Naive thymus-derived CD4-positive, alpha-beta T cell (primary cell): ENCODE measurements at regions of chr1 and their contacts with region 1.

Region 1: GRCh38 chr1:46527474-46528296 is 23.8 kb downstream of the KNCN start:
- DNase-seq: peak; percentile 34 to 81 (median 57)
- ATAC-seq: peak; percentile 79
- H3K4me3 ChIP-seq: no peak overlapping the region
- H3K4me3 Mint-ChIP-seq: peak overlapping the region in 1 of 10 donors; percentile 34
- H3K27ac ChIP-seq: no peak overlapping the region
- H3K27ac Mint-ChIP-seq: peak overlapping the region in 1 of 9 donors; percentile 34
- H3K4me1 ChIP-seq: peaks cover 3 to 5% of the 10 kb centered on the region in 2 donors
- H3K4me1 Mint-ChIP-seq: peaks cover 0 to 20% (median 6%) of the 10 kb centered on the region in 7 donors
- H3K27me3 ChIP-seq: no peaks in the 10 kb centered on the region
- H3K27me3 Mint-ChIP-seq: peaks cover 16 to 35% (median 31%) of the 10 kb centered on the region in 5 donors

Region 2: DNA sequence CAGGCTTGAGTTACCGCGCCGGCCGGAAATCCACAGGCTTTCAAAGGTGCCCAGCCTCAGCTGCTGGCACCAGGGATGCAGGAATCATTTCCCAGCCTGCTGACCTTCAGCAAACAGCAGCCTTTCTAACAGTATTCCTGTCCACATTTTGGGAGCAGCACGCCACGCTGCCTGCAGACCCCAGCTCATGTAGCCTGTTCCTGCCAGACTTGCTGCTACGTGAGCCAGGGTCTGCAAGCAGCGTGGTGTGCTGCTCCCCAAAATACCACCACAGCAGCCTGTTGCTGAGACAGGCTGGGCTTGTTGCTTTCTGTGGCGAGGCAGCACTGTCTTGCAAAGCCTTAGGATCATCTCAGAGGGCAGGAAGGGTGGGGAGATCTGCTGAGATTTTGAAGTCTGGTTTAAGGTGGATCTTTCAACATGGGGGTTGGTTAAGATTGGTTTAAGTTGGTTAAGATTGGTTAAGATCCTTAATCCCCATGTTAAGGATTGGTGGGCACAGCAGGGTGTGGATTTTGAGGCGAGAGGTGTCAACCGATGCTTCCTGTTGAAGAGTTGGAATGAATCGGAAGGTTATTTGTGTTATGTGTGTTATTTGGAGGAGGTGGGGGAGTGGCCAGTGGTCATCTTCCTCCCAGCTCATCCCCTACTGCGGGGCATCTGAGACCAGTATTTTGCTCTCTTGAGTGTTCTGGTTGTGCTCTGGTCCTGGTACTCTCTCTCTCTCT is 120.6 kb before region 1 on chr1:
- CTCF ChIA-PET with region 1: no interaction called
- POLR2A ChIA-PET with region 1: no interaction called
- intact Hi-C with region 1: loop called (anchors 1 kb)
- DNase-seq: no peak
- ATAC-seq: no peak
- H3K4me3 ChIP-seq: no peak overlapping the region
- H3K4me3 Mint-ChIP-seq: peak overlapping the region in 2 of 10 donors; percentile 40 to 42
- H3K27ac ChIP-seq: no peak overlapping the region
- H3K27ac Mint-ChIP-seq: no peak overlapping the region
- H3K4me1 ChIP-seq: no peaks in the 10 kb centered on the region
- H3K4me1 Mint-ChIP-seq: peaks cover 0 to 7% (median 0%) of the 10 kb centered on the region in 7 donors
- H3K27me3 ChIP-seq: no peaks in the 10 kb centered on the region
- H3K27me3 Mint-ChIP-seq: no peaks in the 10 kb centered on the region

Region 3: DNA sequence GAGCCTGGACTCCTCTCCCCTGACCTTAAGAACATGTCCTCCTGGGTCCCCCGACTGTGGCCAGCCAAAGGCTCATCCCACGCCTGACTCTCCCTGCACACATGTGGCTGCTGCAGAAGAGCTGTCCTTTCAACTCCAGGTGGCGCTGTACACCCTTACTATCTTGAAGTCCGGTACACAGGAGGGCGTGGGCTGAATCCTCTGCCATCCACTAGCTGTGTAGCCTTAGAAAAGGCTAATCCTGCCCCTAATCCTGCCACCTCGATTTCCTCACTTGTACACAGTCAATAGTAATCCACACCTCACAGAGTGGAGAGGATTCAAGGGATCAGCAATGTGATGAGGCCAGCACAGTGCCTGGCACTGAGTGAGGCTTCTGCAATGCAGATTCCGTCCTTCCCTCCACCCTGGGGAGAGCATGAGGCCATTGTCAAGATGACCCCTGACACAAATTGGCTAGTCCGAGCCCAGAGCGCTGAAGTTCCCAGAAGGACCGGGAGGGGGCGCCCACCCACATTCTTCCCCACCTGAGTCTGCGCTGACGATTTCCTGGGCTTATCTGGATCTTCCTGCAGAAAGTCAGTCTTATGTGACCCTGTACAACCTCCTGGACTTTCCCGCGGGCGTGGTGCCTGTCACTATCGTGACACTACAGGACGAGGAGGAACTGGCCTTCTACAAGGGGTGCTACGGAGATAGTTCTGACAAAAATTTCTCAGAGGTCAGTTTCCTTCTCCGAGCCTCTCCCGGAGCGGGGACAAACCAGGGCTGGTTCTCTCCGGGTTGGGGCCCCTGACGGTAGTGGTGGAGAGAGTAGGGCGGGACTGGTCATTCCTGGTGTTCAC is 85.1 kb before region 1 on chr1:
- CTCF ChIA-PET with region 1: interaction called, 12 read pairs
- POLR2A ChIA-PET with region 1: no interaction called
- intact Hi-C with region 1: loop called (anchors 1 kb)
- DNase-seq: peak; percentile 39 to 75 (median 63)
- ATAC-seq: peak; percentile 79
- H3K4me3 ChIP-seq: peak overlapping the region; percentile 75
- H3K4me3 Mint-ChIP-seq: peak overlapping the region; percentile 77 to 95 (median 89)
- H3K27ac ChIP-seq: no peak overlapping the region
- H3K27ac Mint-ChIP-seq: peak overlapping the region in 1 of 9 donors; percentile 47
- H3K4me1 ChIP-seq: peaks cover 0 to 1% of the 10 kb centered on the region in 2 donors
- H3K4me1 Mint-ChIP-seq: peaks cover 13 to 20% (median 14%) of the 10 kb centered on the region in 7 donors
- H3K27me3 ChIP-seq: peaks cover 0 to 5% of the 10 kb centered on the region in 2 donors
- H3K27me3 Mint-ChIP-seq: peaks cover 8 to 45% (median 20%) of the 10 kb centered on the region in 5 donors

Region 4: GRCh38 chr1:46477153-46477929 is 50.3 kb before region 1 on chr1:
- CTCF ChIA-PET with region 1: interaction called, 4 read pairs
- POLR2A ChIA-PET with region 1: no interaction called
- intact Hi-C with region 1: loop called (anchors 1 kb)
- DNase-seq: peak; percentile 44 to 79 (median 60)
- ATAC-seq: peak; percentile 92
- H3K4me3 ChIP-seq: no peak overlapping the region
- H3K4me3 Mint-ChIP-seq: no peak overlapping the region
- H3K27ac ChIP-seq: no peak overlapping the region
- H3K27ac Mint-ChIP-seq: peak overlapping the region in 1 of 9 donors; percentile 55
- H3K4me1 ChIP-seq: no peaks in the 10 kb centered on the region
- H3K4me1 Mint-ChIP-seq: no peaks in the 10 kb centered on the region
- H3K27me3 ChIP-seq: no peaks in the 10 kb centered on the region
- H3K27me3 Mint-ChIP-seq: peaks cover 13 to 60% (median 28%) of the 10 kb centered on the region in 5 donors

Region 5: DNA sequence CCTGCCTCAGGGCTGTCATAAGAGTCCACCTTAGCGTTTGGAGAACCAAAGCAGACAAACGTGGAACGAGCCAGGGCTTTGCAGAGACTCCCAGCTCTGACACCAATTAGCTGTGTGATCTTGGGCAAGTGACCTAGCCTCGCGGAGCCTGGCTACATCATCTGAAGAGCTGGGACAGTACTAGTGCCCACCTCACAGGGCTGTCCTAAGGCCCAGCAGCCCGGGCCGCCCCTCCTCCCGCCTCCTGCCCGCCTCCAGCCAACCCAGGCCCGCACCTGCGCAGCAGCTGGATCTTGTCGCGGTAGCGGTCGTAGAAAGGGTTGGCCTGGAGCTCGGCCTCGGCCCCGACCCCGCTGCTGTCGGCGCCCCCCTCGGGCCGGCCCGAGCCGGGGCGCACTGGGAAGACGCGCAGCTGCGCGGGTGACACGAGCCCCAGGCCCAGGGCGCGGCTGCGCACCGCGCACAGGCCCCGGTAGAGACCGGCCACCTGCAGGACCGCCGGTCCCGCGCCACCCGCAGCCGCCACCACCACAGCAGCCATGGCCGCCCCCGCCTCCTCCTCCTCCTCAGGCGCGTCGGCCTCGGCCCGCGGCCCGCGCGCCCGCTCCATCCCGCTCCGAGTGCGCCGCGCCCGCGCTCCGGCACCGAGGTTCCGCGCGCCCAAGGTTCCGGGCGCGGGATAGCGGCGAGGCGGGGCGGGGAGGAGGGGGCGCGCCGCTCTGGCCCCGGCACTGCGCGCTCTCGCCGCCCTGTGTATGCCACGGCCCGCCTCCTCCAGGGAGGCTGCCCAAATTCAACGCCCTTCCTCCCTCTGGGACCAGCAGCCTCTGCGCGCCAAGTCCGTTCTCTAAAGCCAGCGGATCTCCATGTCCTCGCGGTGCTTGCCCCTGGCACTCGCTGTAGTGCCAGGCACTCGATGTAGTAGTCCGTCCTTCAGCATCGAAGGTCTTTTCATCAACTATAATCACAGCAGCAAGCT is 140.4 kb after region 1 on chr1 and contains the start of gene ATPAF1:
- CTCF ChIA-PET with region 1: no interaction called
- POLR2A ChIA-PET with region 1: no interaction called
- intact Hi-C with region 1: loop called in 1 of 2 experiments (anchors 5 kb)
- DNase-seq: peak; percentile 41 to 76 (median 69)
- ATAC-seq: peak; percentile 92
- H3K4me3 ChIP-seq: peak within 1 kb of the TSS; percentile 62
- H3K4me3 Mint-ChIP-seq: peak within 1 kb of the TSS in 8 of 10 donors; percentile 77 to 89 (median 87)
- H3K27ac ChIP-seq: peak within 1 kb of the TSS; percentile 74
- H3K27ac Mint-ChIP-seq: peak within 1 kb of the TSS; percentile 16 to 89 (median 68)
- H3K4me1 ChIP-seq: peaks cover 12 to 21% of the 10 kb centered on the region in 2 donors
- H3K4me1 Mint-ChIP-seq: peaks cover 16 to 30% (median 25%) of the 10 kb centered on the region in 7 donors
- H3K27me3 ChIP-seq: no peaks in the 10 kb centered on the region
- H3K27me3 Mint-ChIP-seq: no peaks in the 10 kb centered on the region
- total RNA-seq, gene ATPAF1: 17.3 to 49.5 (median 28.6) TPM